HAP-1 (cell line): ENCODE measurements at regions of chr17 and their contacts with region 1.

Region 1: GRCh38 chr17:73255671-73256181 is 6.0 kb downstream of the CPSF4L start:
- DNase-seq: peak; percentile 28 to 72
- H3K4me3 ChIP-seq: no peak overlapping the region
- H3K4me1 ChIP-seq: no peaks in the 10 kb centered on the region
- H3K27me3 ChIP-seq: no peaks in the 10 kb centered on the region

Region 2: DNA sequence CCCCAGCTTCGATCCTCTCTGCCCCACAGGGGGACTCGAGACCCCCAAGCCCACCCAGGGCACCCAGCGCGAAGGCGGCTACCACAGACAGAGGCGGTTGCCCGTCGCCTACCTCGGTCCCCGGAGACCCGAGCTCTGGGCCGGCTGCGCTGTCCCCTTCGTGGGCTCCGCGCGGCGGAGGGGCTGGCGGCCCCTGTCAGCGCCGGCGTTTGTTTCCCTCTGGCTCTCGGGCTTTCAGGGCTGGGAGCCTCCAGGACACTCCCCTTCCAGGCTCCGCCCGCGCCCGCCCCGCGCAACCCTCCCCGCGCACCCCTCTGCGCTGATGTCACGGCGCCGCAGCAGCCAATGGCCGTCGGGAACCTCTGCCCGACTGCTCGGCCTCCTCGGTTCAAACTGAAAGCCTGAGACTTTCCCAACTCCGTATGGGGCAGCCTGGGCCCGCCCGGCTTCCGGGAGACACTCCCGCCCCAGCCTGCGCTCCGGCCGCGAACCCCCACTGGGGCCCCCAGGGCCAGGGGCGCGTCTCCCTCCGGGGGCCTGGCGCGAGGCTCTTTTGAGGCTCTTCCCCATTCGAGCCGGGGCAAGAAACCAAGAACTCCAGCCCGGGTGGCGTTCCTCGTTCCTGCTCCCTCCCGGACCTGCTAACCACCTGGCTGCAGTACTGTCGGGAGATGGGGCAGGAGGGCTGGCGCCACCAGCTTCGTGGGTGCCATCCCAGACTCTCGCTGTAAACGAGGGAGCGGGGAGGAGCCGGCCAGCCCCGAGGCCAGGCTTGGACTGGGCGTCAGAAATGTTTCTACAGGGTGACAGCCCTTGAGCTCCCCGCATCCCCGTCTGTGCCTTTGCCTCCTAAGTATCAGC is 56.3 kb after region 1 on chr17 and contains the start of gene CDC42EP4:
- in situ Hi-C with region 1: loop called (anchors 5 kb)
- DNase-seq: peak; percentile 91 to 96
- H3K4me3 ChIP-seq: peak within 1 kb of the TSS; percentile 94
- H3K4me1 ChIP-seq: peaks cover 28% of the 10 kb centered on the region
- H3K27me3 ChIP-seq: no peaks in the 10 kb centered on the region

Region 3: DNA sequence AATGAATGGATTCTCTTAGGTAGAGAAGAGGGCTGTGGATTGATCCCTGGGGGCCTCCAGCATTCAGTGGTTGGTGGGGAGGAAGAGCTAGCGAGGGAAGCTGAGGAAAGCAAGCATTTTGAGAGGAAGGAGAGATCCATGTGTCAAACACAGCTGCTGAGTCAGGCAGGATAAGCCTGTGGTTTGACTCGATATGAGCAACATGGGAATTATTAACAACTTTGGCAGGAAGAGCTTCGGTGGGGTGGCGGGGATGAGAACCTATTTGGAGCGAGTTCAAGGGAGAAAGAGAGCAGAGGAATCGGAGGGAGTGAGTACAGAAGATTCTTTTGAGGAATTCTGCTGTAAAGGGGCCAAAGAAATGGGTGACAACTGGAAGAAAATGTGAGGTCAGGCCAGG is 115.6 kb after region 1 on chr17:
- in situ Hi-C with region 1: loop called (anchors 5 kb)
- DNase-seq: no peak
- H3K4me3 ChIP-seq: no peak overlapping the region
- H3K4me1 ChIP-seq: no peaks in the 10 kb centered on the region
- H3K27me3 ChIP-seq: peaks cover 24% of the 10 kb centered on the region

Region 4: GRCh38 chr17:73501431-73501830 is 245.7 kb after region 1 on chr17:
- in situ Hi-C with region 1: no loop called
- DNase-seq: no peak
- H3K4me3 ChIP-seq: no peak overlapping the region
- H3K4me1 ChIP-seq: no peaks in the 10 kb centered on the region
- H3K27me3 ChIP-seq: peaks cover 15% of the 10 kb centered on the region; the same call in 1 of the 2 replicates

Region 5: GRCh38 chr17:74203439-74204240 is 947.9 kb after region 1 on chr17 and contains the start of gene RPL38:
- in situ Hi-C with region 1: loop called (anchors 25 kb)
- DNase-seq: peak; percentile 92 to 98
- H3K4me3 ChIP-seq: peak within 1 kb of the TSS; percentile 99
- H3K4me1 ChIP-seq: peaks cover 28% of the 10 kb centered on the region
- H3K27me3 ChIP-seq: peaks cover 23% of the 10 kb centered on the region